ENCODE measurements at regions of chr1 and their contacts with region 1.

Region 1: GRCh38 chr1:116418091-116418830 is 45.2 kb downstream of the ATP1A1 start:
- DNase-seq: peak; percentile 76 to 90 (median 88)
- ATAC-seq: peak; percentile 97
- H3K4me3 ChIP-seq: peak overlapping the region; percentile 97
- H3K4me3 Mint-ChIP-seq: peak overlapping the region; percentile 85 to 95 (median 90)
- H3K27ac ChIP-seq: peak overlapping the region; percentile 87
- H3K27ac Mint-ChIP-seq: peak overlapping the region; percentile 83 to 98 (median 95)
- H3K4me1 ChIP-seq: peaks cover 12 to 18% of the 10 kb centered on the region in 2 donors
- H3K4me1 Mint-ChIP-seq: peaks cover 22 to 52% (median 47%) of the 10 kb centered on the region in 7 donors
- H3K27me3 ChIP-seq: no peaks in the 10 kb centered on the region
- H3K27me3 Mint-ChIP-seq: peaks cover 0 to 15% (median 0%) of the 10 kb centered on the region in 5 donors

Region 2: GRCh38 chr1:116151739-116152576 is 266.3 kb before region 1 on chr1:
- CTCF ChIA-PET with region 1: no interaction called
- POLR2A ChIA-PET with region 1: interaction called, 5 read pairs
- intact Hi-C with region 1: loop called (anchors 1 to 5 kb)
- DNase-seq: peak; percentile 61 to 89 (median 76)
- ATAC-seq: peak; percentile 97
- H3K4me3 ChIP-seq: peak overlapping the region; percentile 48
- H3K4me3 Mint-ChIP-seq: peak overlapping the region; percentile 70 to 87 (median 82)
- H3K27ac ChIP-seq: peak overlapping the region; percentile 74
- H3K27ac Mint-ChIP-seq: peak overlapping the region; percentile 63 to 98 (median 92)
- H3K4me1 ChIP-seq: peaks cover 7 to 21% of the 10 kb centered on the region in 2 donors
- H3K4me1 Mint-ChIP-seq: peaks cover 9 to 32% (median 25%) of the 10 kb centered on the region in 7 donors
- H3K27me3 ChIP-seq: no peaks in the 10 kb centered on the region
- H3K27me3 Mint-ChIP-seq: peaks cover 0 to 31% (median 0%) of the 10 kb centered on the region in 5 donors

Region 3: GRCh38 chr1:116182019-116182714 is 236.1 kb before region 1 on chr1:
- CTCF ChIA-PET with region 1: no interaction called
- POLR2A ChIA-PET with region 1: no interaction called
- intact Hi-C with region 1: no loop called
- DNase-seq: no peak
- ATAC-seq: no peak
- H3K4me3 ChIP-seq: no peak overlapping the region
- H3K4me3 Mint-ChIP-seq: no peak overlapping the region
- H3K27ac ChIP-seq: no peak overlapping the region
- H3K27ac Mint-ChIP-seq: no peak overlapping the region
- H3K4me1 ChIP-seq: no peaks in the 10 kb centered on the region
- H3K4me1 Mint-ChIP-seq: no peaks in the 10 kb centered on the region
- H3K27me3 ChIP-seq: no peaks in the 10 kb centered on the region
- H3K27me3 Mint-ChIP-seq: peaks cover 0 to 39% (median 5%) of the 10 kb centered on the region in 5 donors

Region 4: DNA sequence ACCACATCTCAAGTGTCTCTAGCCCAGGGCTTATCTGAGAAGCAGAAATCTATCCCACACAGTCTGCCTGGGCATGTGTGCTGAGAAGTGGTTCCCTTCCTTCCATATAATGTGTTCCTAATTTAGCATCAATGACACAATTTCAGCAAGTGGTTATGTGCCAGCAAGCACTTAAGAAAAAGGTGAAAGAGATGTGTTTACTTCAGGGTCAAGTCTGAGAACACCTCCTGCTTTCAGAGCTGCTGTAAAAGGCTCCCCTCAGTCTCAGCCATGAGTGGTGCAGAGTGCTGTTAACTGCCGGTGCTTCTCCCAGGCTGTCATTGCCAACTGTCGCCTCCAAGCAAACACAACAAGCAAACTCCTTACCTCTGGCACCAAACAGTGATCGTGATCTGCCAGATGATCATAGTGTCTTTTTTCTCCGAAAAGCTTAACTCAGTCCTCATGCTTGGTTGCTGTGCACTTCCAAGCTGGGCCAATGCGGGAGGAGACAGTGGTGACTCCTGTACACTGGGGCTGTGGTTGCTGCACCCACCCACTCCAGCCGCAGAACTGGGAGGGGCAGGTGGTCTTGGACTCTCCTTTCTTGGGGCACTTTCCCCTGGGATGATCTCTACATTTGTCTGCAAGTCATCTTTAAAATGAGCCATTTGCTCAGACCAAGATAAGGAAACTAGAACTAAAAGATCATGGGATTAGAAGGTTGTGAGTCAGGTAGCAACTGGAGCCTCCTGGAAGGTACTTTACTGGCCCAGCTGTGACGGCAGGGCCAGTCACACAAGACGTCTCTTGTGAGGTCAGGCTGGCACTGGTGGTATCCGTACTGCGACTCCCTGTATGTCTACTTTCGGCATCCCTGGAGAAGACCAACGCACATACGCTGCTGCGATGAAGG is 12.8 kb before region 1 on chr1:
- CTCF ChIA-PET with region 1: interaction called, 3 read pairs
- POLR2A ChIA-PET with region 1: interaction called, 15 read pairs
- intact Hi-C with region 1: no loop called
- DNase-seq: no peak
- ATAC-seq: no peak
- H3K4me3 ChIP-seq: no peak overlapping the region
- H3K4me3 Mint-ChIP-seq: no peak overlapping the region
- H3K27ac ChIP-seq: no peak overlapping the region
- H3K27ac Mint-ChIP-seq: peak overlapping the region in 8 of 9 donors; percentile 38 to 83 (median 66)
- H3K4me1 ChIP-seq: peaks cover 3 to 5% of the 10 kb centered on the region in 2 donors
- H3K4me1 Mint-ChIP-seq: peaks cover 13 to 59% (median 34%) of the 10 kb centered on the region in 7 donors
- H3K27me3 ChIP-seq: no peaks in the 10 kb centered on the region
- H3K27me3 Mint-ChIP-seq: no peaks in the 10 kb centered on the region

Region 5: GRCh38 chr1:116433275-116434257 is 15.3 kb after region 1 on chr1:
- CTCF ChIA-PET with region 1: interaction called, 3 read pairs
- POLR2A ChIA-PET with region 1: interaction called, 17 read pairs
- intact Hi-C with region 1: no loop called
- DNase-seq: no peak
- ATAC-seq: peak; percentile 26
- H3K4me3 ChIP-seq: no peak overlapping the region
- H3K4me3 Mint-ChIP-seq: no peak overlapping the region
- H3K27ac ChIP-seq: no peak overlapping the region
- H3K27ac Mint-ChIP-seq: no peak overlapping the region
- H3K4me1 ChIP-seq: no peaks in the 10 kb centered on the region
- H3K4me1 Mint-ChIP-seq: no peaks in the 10 kb centered on the region
- H3K27me3 ChIP-seq: no peaks in the 10 kb centered on the region
- H3K27me3 Mint-ChIP-seq: peaks cover 0 to 19% (median 0%) of the 10 kb centered on the region in 5 donors